Activated CD4-positive, alpha-beta T cell treated with anti-CD3 and anti-CD28 coated beads for 36 hours (primary cell): ENCODE measurements at regions of chr4 and their contacts with region 1.

Region 1: DNA sequence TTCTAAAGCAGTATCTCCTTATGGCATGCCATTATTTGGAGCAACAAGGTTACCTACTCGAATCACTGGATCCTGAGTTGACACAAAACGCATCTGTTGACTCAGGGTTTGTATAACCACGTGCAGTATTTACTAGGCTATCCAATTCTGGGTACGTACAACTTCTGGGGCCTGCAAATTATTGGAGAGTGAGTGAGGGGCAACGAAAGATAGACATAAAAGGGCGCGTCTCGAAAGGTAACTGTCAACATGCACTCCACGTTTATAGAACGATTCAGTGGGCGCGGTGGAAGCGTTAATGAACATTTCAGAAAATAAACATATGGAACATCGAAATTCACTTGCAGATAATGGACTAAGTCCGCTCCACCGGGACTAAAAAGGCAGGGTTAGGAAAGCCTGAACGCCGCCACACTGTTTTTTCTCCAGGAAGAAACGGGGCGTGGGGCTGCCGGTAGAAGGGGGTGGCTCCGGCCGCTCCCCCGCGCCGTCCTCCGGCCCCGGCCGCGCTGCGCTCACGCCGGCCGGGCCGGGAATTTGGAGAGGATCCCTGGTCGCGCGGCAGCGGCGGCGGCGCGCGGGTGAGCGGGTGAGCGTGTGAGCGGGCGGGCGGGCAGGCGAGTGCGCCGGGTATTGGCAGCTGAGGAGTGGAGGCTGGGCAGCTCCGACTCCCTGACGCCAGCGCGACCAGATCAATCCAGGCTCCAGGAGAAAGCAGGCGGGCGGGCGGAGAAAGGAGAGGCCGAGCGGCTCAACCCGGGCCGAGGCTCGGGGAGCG is at the start of gene SMAD1:
- DNase-seq: peak; percentile 73
- ATAC-seq: peak; percentile 54
- H3K4me3 Mint-ChIP-seq: peak within 1 kb of the TSS; percentile 73
- H3K27ac Mint-ChIP-seq: peak within 1 kb of the TSS; percentile 75
- H3K4me1 Mint-ChIP-seq: peaks cover 19% of the 10 kb centered on the region
- H3K27me3 Mint-ChIP-seq: peaks cover 12% of the 10 kb centered on the region
- total RNA-seq, gene SMAD1: 5.3 to 10.7 TPM

Region 2: DNA sequence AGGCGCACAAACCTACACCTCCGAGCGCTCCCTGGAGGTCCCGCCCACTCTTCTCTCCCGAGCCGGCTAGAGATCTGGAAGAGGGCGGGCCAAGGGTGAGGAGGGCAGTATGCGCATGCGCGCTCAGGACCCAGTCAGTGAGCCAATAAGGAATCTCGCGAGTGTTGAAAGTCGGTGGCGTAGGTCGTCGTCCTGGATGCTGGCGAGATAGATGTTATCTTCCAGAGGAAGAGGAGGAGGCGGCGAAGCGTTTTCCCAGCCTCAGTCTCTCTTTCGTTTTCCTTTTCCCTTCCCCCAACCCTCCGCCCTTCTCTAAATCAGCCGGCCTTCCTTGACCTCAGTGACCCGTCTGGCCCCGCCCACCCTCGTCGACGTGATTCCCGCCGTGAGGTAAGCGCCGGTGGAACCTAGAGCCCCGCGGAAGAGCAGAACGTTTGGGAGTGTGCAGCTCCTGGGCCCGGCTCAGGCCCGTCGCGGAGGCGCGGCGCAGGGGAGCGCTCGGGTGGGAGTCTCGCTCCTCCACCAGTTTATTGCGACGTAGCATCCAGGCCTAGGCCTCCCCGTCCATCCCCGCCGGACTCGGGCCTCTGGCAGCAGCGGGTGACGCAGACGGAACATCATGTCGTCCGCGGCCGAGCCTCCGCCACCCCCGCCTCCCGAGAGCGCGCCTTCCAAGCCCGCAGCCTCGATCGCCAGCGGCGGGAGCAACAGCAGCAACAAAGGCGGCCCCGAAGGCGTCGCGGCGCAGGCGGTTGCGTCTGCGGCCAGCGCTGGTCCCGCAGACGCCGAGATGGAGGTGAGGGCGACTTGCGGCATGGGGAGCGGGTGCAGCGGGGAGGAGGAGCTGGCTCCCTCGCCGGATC is 1967.8 kb before region 1 on chr4 and contains the start of gene SMARCA5:
- CTCF ChIA-PET with region 1: no interaction called
- POLR2A ChIA-PET with region 1: no interaction called
- intact Hi-C with region 1: loop called in 1 of 2 experiments (anchors 10 kb)
- DNase-seq: peak; percentile 97
- ATAC-seq: peak; percentile 85
- H3K4me3 Mint-ChIP-seq: peak within 1 kb of the TSS; percentile 100
- H3K27ac Mint-ChIP-seq: peak within 1 kb of the TSS; percentile 99
- H3K4me1 Mint-ChIP-seq: peaks cover 29% of the 10 kb centered on the region
- H3K27me3 Mint-ChIP-seq: no peaks in the 10 kb centered on the region
- total RNA-seq, gene SMARCA5: 66.6 to 69.8 TPM

Region 3: GRCh38 chr4:145180298-145181090 is 300.9 kb before region 1 on chr4 and contains the start of gene OTUD4:
- CTCF ChIA-PET with region 1: no interaction called
- POLR2A ChIA-PET with region 1: interaction called, 5 read pairs
- intact Hi-C with region 1: loop called (anchors 1 to 2 kb)
- DNase-seq: peak; percentile 97
- ATAC-seq: peak; percentile 84
- H3K4me3 Mint-ChIP-seq: peak within 1 kb of the TSS; percentile 91
- H3K27ac Mint-ChIP-seq: peak within 1 kb of the TSS; percentile 97
- H3K4me1 Mint-ChIP-seq: peaks cover 29% of the 10 kb centered on the region
- H3K27me3 Mint-ChIP-seq: no peaks in the 10 kb centered on the region
- total RNA-seq, gene OTUD4: 52.6 to 57.1 TPM

Region 4: DNA sequence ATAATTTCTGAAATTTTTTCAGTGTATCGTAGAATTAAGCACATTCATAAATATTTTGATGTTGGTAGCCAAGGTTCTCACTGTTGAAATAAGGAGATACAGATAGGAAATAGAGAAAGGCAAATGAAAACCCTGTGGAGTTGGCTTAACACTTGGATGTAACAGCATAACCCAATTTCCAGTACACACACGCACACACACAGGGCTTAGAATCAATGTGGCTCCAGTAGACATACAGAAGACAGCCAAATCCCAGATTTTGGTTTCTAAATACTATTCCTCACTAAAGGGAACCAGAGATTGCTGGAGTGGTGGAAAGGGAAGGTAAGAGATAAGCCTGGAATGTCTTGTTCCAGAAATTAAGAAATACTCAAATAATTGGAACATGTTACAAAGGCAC is 54.7 kb after region 1 on chr4:
- CTCF ChIA-PET with region 1: no interaction called
- POLR2A ChIA-PET with region 1: no interaction called
- intact Hi-C with region 1: no loop called
- DNase-seq: no peak
- ATAC-seq: no peak
- H3K4me3 Mint-ChIP-seq: no peak overlapping the region
- H3K27ac Mint-ChIP-seq: no peak overlapping the region
- H3K4me1 Mint-ChIP-seq: peaks cover 4% of the 10 kb centered on the region
- H3K27me3 Mint-ChIP-seq: no peaks in the 10 kb centered on the region

Region 5: GRCh38 chr4:145557720-145558119 is 76.4 kb after region 1 on chr4:
- CTCF ChIA-PET with region 1: interaction called, 4 read pairs
- POLR2A ChIA-PET with region 1: no interaction called
- intact Hi-C with region 1: loop called in 1 of 2 experiments (anchors 2 kb)
- DNase-seq: peak; percentile 78
- ATAC-seq: peak; percentile 91
- H3K4me3 Mint-ChIP-seq: no peak overlapping the region
- H3K27ac Mint-ChIP-seq: no peak overlapping the region
- H3K4me1 Mint-ChIP-seq: peaks cover under 1% of the 10 kb centered on the region
- H3K27me3 Mint-ChIP-seq: no peaks in the 10 kb centered on the region

Region 6: DNA sequence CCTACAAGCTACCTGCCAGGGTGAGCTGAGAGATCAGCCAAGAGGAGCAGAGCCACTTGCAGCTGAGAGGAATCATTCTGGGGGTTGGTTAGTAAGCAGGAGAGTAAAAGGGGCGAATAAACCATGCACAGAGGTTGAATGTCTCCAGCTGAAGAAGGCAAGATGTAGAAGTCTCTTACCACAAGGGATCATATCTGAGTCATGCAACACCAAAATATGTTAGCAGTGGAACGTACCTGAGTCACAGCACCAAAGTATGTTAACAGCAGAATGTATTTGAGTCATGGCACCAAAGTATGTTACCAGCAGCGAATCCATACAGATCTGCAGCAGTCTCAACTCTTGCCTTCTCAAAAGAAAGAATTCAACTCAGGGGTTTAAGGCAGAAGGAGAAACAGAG is 228.5 kb after region 1 on chr4:
- CTCF ChIA-PET with region 1: no interaction called
- POLR2A ChIA-PET with region 1: no interaction called
- intact Hi-C with region 1: no loop called
- DNase-seq: peak; percentile 19
- ATAC-seq: peak; percentile 96
- H3K4me3 Mint-ChIP-seq: no peak overlapping the region
- H3K27ac Mint-ChIP-seq: peak overlapping the region; percentile 40
- H3K4me1 Mint-ChIP-seq: peaks cover 14% of the 10 kb centered on the region
- H3K27me3 Mint-ChIP-seq: no peaks in the 10 kb centered on the region

Region 7: DNA sequence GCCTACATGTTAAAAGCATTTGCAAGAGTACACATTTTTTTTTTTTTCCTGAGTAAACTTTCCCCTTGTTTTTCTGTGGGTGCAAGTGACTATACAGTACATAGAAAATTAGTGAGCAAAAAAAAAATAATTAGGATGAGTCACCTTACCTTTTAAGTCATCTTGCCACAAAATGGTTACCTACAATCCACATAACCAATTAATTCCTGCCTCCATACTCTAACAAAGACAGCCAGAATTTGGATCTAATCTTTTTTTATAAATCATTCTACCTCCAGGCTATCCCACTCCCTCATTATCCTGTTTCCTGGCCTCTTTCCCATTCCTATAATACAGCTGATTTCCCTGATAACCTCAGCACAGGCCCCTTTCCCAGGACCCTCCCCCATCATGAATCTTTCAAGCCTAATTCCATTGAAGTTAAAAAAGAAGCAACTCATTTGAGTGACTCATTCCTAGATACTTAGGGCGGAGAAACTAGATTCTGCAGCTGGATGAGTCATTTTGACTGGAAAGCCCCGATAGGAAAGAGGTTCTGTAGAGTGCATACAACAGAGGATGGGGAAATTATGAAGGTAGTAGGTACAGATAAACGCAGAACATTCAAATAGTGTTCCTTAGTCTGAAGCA is 326.8 kb after region 1 on chr4:
- CTCF ChIA-PET with region 1: no interaction called
- POLR2A ChIA-PET with region 1: no interaction called
- intact Hi-C with region 1: loop called (anchors 1 to 5 kb)
- DNase-seq: peak; percentile 65
- ATAC-seq: peak; percentile 82
- H3K4me3 Mint-ChIP-seq: peak overlapping the region; percentile 39
- H3K27ac Mint-ChIP-seq: peak overlapping the region; percentile 95
- H3K4me1 Mint-ChIP-seq: peaks cover 59% of the 10 kb centered on the region
- H3K27me3 Mint-ChIP-seq: no peaks in the 10 kb centered on the region

Region 8: GRCh38 chr4:145936142-145936996 is 455.0 kb after region 1 on chr4:
- CTCF ChIA-PET with region 1: no interaction called
- POLR2A ChIA-PET with region 1: no interaction called
- intact Hi-C with region 1: loop called in 1 of 2 experiments (anchors 2 kb)
- DNase-seq: peak; percentile 77
- ATAC-seq: peak; percentile 41
- H3K4me3 Mint-ChIP-seq: peak overlapping the region; percentile 97
- H3K27ac Mint-ChIP-seq: peak overlapping the region; percentile 93
- H3K4me1 Mint-ChIP-seq: peaks cover 54% of the 10 kb centered on the region
- H3K27me3 Mint-ChIP-seq: no peaks in the 10 kb centered on the region

Region 9: GRCh38 chr4:146458594-146458993 is 977.2 kb after region 1 on chr4:
- CTCF ChIA-PET with region 1: no interaction called
- POLR2A ChIA-PET with region 1: no interaction called
- intact Hi-C with region 1: loop called in 1 of 2 experiments (anchors 10 kb)
- DNase-seq: no peak
- ATAC-seq: peak; percentile 96
- H3K4me3 Mint-ChIP-seq: peak overlapping the region; percentile 62
- H3K27ac Mint-ChIP-seq: peak overlapping the region; percentile 93
- H3K4me1 Mint-ChIP-seq: peaks cover 24% of the 10 kb centered on the region
- H3K27me3 Mint-ChIP-seq: no peaks in the 10 kb centered on the region